ENCODE measurements at regions of chr2 and their contacts with region 1.

Region 1: GRCh38 chr2:119276864-119277263 is 53.2 kb downstream of the STEAP3 start:
- DNase-seq: no peak
- ATAC-seq: no peak
- H3K4me3 ChIP-seq: no peak overlapping the region
- H3K27ac ChIP-seq: no peak overlapping the region
- H3K4me1 ChIP-seq: peaks cover 0 to 4% (median 0%) of the 10 kb centered on the region in 12 donors
- H3K27me3 ChIP-seq: no peaks in the 10 kb centered on the region
- CTCF ChIP-seq: no peak
- POLR2A ChIP-seq: no peak

Region 2: DNA sequence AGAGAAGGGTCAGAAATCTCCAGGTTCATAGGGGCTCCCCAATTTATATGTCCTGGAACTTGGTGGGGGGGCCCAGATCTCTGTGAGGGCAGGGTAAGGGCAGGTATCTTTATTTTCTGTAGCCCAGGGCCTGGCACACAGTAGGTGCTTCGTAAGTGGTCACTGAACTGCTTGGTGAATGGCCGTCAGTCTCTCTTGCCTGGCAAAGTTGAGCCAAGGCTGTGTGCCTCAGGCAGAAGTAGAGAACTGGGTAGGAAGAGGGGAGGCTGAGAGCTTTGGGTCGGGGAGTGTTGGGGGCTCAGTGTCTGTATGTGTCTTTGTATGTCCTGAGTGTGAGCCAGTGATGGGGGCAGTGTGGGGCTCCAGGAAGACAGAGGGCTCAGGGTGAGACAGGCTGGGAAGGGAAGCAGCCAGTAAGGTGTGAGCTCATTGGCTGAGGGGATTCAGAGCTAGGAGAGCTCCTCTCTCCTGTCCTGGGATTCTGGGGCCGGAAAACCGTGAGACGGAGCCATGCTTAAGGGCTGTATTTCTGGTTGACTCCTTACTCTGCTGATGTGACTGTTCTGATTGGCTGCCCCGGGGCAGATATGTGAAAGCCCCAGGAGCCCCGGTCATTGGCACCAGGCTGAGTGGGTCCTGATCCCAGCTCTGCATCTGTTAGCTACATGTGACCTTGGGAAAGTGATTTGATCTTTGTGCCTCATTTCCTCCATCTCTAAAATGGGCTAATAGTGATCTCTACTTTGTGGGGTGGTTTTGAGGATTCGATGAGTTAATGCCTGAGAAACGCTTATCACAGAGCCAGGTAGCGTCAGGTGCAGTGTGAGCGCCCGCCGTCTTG is 22.9 kb before region 1 on chr2:
- intact Hi-C with region 1: loop called in 1 of 10 experiments (anchors 1 kb)
- DNase-seq: no peak
- ATAC-seq: no peak
- H3K4me3 ChIP-seq: no peak overlapping the region
- H3K27ac ChIP-seq: no peak overlapping the region
- H3K4me1 ChIP-seq: peaks cover 0 to 20% (median 1%) of the 10 kb centered on the region in 12 donors
- H3K27me3 ChIP-seq: no peaks in the 10 kb centered on the region
- CTCF ChIP-seq: no peak
- POLR2A ChIP-seq: no peak

Region 3: DNA sequence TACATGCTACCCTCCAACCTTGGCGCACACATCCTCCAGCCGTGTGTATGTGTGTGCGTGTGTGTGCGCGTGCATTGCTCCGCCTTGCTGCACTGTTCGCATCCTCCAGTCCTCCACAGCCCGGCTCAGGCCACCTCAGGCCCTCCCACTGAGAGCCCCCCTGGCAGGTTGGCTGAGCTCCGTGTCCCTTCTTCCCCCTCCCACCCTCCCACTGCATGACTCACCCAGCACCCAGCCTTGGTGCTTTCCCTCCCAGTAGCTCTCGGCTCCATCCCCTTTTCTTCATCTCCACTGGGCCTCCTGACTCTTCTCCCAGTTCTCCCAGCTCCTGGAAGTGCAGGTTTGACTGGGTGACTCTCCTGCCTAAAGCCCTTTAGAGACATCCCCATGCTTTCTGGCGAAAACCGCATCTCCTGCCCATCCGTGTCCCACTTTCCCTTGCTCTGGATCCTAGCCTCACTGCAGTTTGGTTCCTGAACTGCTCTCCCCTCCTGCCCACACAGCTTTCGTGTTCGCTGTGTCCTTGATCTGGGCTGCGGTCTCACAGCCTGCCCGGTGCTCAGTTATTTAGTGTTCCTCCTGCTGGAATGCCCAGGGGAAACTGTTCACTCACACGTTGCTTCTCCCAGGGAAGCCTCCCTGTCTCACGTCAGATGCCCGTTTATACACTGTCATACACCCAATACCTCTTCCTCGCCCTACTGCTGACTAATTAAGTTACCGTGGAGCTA is 407.0 kb after region 1 on chr2:
- intact Hi-C with region 1: no loop called
- DNase-seq: no peak
- ATAC-seq: peak in 1 of 4 donors; percentile 3
- H3K4me3 ChIP-seq: no peak overlapping the region
- H3K27ac ChIP-seq: no peak overlapping the region
- H3K4me1 ChIP-seq: peaks cover 0 to 14% (median 6%) of the 10 kb centered on the region in 12 donors
- H3K27me3 ChIP-seq: no peaks in the 10 kb centered on the region
- CTCF ChIP-seq: no peak
- POLR2A ChIP-seq: no peak